ENCODE measurements at regions of chr4 and their contacts with region 1.

Region 1: GRCh38 chr4:123661080-123661737 is 264.6 kb downstream of the SPRY1 start:
- DNase-seq: peak; percentile 34
- H3K4me3 ChIP-seq: no peak overlapping the region
- H3K27ac ChIP-seq: no peak overlapping the region
- H3K4me1 ChIP-seq: no peaks in the 10 kb centered on the region
- CTCF ChIP-seq: peak; percentile 85

Region 2: DNA sequence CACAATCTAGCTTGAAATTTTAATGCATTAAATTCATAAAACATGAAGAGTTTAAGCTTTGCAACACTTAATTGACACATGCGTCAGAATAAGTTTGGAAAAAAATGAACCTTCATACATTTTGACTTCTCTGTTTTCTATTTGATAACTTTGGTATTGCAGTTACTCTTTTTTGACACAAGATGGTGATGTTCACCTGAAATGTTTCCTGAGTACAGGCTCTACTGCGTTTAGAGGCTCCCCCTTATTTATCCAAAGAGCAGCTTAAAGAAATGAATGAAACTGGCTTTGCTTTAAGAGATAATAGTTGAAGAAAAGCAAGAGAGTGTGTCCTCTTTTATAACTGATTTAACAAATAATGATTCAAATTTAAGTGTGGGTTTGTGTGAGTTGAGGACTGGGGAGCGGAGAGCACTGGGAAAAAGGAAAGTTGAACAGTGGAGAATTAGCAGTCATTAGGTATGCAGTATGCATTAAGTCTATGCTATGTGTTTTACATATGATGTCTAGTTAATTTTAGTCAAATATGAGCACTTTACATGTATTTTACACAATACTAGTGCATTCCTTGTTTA is 558.2 kb before region 1 on chr4:
- CTCF ChIA-PET with region 1: no interaction called
- POLR2A ChIA-PET with region 1: no interaction called
- intact Hi-C with region 1: loop called (anchors 5 kb)
- DNase-seq: peak; percentile 50
- H3K4me3 ChIP-seq: no peak overlapping the region
- H3K27ac ChIP-seq: no peak overlapping the region
- H3K4me1 ChIP-seq: no peaks in the 10 kb centered on the region
- CTCF ChIP-seq: peak; percentile 92

Region 3: GRCh38 chr4:123127218-123127617 is 534.0 kb before region 1 on chr4:
- CTCF ChIA-PET with region 1: no interaction called
- POLR2A ChIA-PET with region 1: no interaction called
- intact Hi-C with region 1: loop called (anchors 2 kb)
- DNase-seq: peak; percentile 9
- H3K4me3 ChIP-seq: no peak overlapping the region
- H3K27ac ChIP-seq: no peak overlapping the region
- H3K4me1 ChIP-seq: no peaks in the 10 kb centered on the region
- CTCF ChIP-seq: peak; percentile 71

Region 4: DNA sequence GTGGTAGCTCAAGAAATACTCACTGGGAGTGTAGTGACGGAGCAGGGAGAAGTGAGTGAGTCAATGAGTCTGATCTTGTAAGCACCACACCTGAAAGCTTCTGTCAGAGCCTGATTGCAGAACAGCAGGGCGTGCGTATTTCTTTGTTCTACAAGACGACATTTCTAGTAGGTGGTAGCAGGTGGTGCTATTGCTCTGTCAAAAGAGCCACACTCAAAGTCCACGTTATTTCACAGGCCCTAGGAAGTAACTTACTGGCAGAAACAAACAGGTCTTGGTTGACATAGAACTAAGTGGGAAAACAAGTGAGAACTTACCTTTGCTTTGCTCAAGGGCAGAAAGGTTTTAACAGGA is 311.0 kb before region 1 on chr4:
- CTCF ChIA-PET with region 1: no interaction called
- POLR2A ChIA-PET with region 1: no interaction called
- intact Hi-C with region 1: loop called (anchors 2 kb)
- DNase-seq: peak; percentile 82
- H3K4me3 ChIP-seq: no peak overlapping the region
- H3K27ac ChIP-seq: no peak overlapping the region
- H3K4me1 ChIP-seq: peaks cover 41% of the 10 kb centered on the region
- CTCF ChIP-seq: peak; percentile 81

Region 5: DNA sequence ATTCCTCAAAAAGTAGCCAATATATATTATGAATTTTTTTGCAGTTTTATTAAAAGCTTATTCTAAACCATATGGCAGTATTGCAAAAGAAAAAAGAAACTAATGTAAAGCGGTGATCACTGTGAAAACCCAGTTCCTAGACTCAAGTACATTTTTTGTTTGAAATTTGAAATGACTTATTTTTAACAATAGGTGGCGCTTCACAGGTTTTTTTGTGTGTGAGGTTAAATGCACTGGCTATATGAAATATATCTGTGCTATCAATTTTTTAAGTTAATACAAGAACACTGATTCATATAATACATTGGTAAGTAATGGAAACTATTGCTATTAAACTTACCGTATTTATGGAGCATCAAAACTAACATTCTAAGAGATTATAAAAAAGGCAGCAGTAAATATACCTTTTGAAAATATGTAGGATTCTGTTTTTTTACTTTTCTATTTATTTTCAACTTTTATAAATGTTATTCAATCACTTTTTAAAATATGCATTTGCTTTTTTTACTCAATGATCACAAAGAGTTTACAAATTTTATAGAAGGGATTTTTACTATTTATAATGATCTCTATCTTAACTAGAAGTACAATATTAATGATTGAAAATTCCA is 270.3 kb before region 1 on chr4:
- CTCF ChIA-PET with region 1: interaction called, 3 read pairs
- POLR2A ChIA-PET with region 1: no interaction called
- intact Hi-C with region 1: loop called (anchors 2 kb)
- DNase-seq: peak; percentile 66
- H3K4me3 ChIP-seq: no peak overlapping the region
- H3K27ac ChIP-seq: no peak overlapping the region
- H3K4me1 ChIP-seq: no peaks in the 10 kb centered on the region
- CTCF ChIP-seq: peak; percentile 96

Region 6: GRCh38 chr4:123564758-123565346 is 96.4 kb before region 1 on chr4:
- CTCF ChIA-PET with region 1: no interaction called
- POLR2A ChIA-PET with region 1: no interaction called
- intact Hi-C with region 1: loop called (anchors 5 kb)
- DNase-seq: peak; percentile 89
- H3K4me3 ChIP-seq: no peak overlapping the region
- H3K27ac ChIP-seq: no peak overlapping the region
- H3K4me1 ChIP-seq: no peaks in the 10 kb centered on the region
- CTCF ChIP-seq: peak; percentile 100